AG04449 (cell line): ENCODE measurements at regions of chr10 and their contacts with region 1.

Region 1: GRCh38 chr10:30783939-30784500 is 154.5 kb upstream of the LYZL2 start:
- DNase-seq: peak; percentile 59
- H3K4me3 ChIP-seq: peak overlapping the region; percentile 33
- CTCF ChIP-seq: peak; percentile 93

Region 2: DNA sequence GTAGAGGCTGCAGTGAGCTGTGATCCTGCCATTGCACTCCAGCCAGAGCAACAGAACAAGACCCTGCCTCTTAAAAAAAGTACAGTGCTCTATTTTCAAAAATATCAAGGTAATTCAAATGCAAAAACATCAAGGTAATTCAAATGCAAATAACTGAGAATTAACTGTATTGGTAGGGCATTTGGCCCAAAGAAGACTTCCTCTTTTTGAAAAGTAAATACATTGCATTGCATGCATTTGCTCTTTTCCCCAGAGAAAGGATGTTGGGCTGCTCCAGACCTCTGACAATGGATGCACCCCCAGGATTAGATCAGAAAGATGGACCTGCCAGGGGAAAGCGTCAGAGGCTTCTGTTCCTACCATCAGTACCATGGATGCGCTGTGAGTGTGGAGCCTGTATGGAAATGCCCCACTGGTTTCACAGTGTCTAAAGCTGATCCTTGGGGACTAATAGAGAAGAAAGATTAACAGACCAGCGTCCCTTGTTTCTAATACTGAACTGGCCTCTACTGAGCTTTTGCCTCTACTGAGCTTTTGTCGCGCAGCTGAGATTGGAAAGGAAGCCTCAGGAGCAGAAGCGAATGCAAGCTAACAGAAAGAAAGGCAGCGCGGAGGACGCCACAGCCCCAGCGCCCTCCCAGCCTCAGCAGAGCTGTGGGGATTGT is 60.9 kb before region 1 on chr10:
- CTCF ChIA-PET with region 1: interaction called, 14 read pairs
- POLR2A ChIA-PET with region 1: no interaction called
- DNase-seq: no peak
- H3K4me3 ChIP-seq: no peak overlapping the region
- CTCF ChIP-seq: no peak

Region 3: GRCh38 chr10:31031558-31032257 is 247.7 kb after region 1 on chr10 and contains the start of gene ZNF438:
- CTCF ChIA-PET with region 1: interaction called, 31 read pairs
- POLR2A ChIA-PET with region 1: interaction called, 6 read pairs
- DNase-seq: peak; percentile 59
- H3K4me3 ChIP-seq: peak within 1 kb of the TSS; percentile 72
- CTCF ChIP-seq: peak; percentile 47

Region 4: GRCh38 chr10:31490858-31491504 is 707.0 kb after region 1 on chr10:
- CTCF ChIA-PET with region 1: interaction called, 15 read pairs
- POLR2A ChIA-PET with region 1: no interaction called
- DNase-seq: no peak
- H3K4me3 ChIP-seq: no peak overlapping the region
- CTCF ChIP-seq: peak; percentile 48